ENCODE measurements at regions of chr10 and their contacts with region 1.

Region 1: GRCh38 chr10:21238717-21239116 is 286.8 kb downstream of the SKIDA1 start:
- DNase-seq: no peak
- H3K4me3 ChIP-seq: no peak overlapping the region
- H3K27ac ChIP-seq: no peak overlapping the region
- H3K4me1 ChIP-seq: peaks cover 0 to 2% (median 0%) of the 10 kb centered on the region in 4 experiments; a peak in 1 of 7 replicates
- H3K27me3 ChIP-seq: no peaks in the 10 kb centered on the region
- CTCF ChIP-seq: no peak
- EP300 ChIP-seq: no peak
- POLR2A ChIP-seq: no peak
- RAD21 ChIP-seq: no peak

Region 2: DNA sequence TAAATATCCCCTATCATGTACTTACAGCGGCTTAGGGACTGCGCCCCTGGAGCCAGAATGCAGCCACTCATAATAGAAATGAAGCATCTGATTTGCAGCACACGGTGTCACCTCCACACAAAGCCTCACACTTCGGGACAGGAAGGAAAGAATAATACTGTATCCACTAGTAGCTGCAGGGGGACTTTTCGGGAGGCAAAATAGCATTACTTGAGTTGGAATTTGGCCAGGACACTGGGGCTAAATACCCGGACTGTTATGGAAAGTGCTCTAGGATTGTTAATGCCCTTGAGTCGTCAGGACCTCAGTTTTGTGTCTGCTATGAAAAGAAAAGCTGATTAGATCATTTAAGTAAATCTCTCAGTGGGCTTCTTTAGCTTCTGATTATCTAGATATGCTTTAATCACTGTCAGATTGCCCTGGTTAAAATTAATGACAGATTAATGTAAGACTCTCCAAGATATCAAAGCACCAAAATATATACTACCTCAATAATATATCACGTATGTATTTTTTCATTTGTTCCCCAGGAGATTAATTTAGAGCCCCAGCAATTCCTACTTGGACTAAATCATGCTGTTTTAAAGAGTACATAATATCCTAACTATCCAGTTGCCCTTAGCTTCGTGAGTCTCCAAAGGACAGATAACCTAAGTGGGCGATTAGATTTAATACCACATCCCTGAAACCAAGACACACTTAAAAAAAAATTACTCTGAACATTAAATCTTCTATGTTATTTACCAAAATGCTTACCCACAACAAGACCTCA is 168.6 kb before region 1 on chr10:
- CTCF ChIA-PET with region 1: no interaction called
- POLR2A ChIA-PET with region 1: no interaction called
- DNase-seq: no peak
- H3K4me3 ChIP-seq: no peak overlapping the region
- H3K27ac ChIP-seq: no peak overlapping the region
- H3K4me1 ChIP-seq: peaks cover 0 to 3% (median 0%) of the 10 kb centered on the region in 4 experiments; a peak in 1 of 7 replicates
- H3K27me3 ChIP-seq: no peaks in the 10 kb centered on the region
- CTCF ChIP-seq: no peak
- EP300 ChIP-seq: no peak
- POLR2A ChIP-seq: no peak
- RAD21 ChIP-seq: no peak

Region 3: GRCh38 chr10:21260506-21261149 is 21.9 kb after region 1 on chr10:
- CTCF ChIA-PET with region 1: interaction called, 36 read pairs
- POLR2A ChIA-PET with region 1: no interaction called
- DNase-seq: no peak
- H3K4me3 ChIP-seq: no peak overlapping the region
- H3K27ac ChIP-seq: no peak overlapping the region
- H3K4me1 ChIP-seq: peaks cover 0 to 4% (median 1%) of the 10 kb centered on the region in 4 experiments; a peak in 3 of 7 replicates
- H3K27me3 ChIP-seq: no peaks in the 10 kb centered on the region
- CTCF ChIP-seq: no peak
- EP300 ChIP-seq: no peak
- POLR2A ChIP-seq: no peak
- RAD21 ChIP-seq: peak in 1 of 2 experiments; percentile 25; a peak in 2 of 4 replicates

Region 4: DNA sequence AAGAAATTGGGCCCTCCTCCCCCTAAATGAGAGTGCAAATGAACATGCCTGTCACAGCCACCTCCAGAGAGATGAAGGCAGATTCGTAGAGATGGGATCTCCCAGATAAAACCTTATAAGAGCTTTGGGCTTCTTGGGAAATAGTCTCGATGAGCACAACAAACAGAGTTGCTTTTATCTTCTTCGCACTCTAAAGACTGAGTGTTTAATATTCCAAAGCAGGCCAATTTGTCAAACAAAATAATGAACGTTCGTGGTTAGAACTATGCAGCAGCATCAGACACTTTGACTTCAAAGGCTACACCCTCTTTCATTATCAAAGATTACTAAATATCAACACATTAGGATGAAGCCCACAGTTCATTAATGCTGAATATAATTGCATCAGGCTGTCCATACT is 30.6 kb after region 1 on chr10:
- CTCF ChIA-PET with region 1: interaction called, 10 read pairs
- POLR2A ChIA-PET with region 1: no interaction called
- DNase-seq: no peak
- H3K4me3 ChIP-seq: no peak overlapping the region
- H3K27ac ChIP-seq: no peak overlapping the region
- H3K4me1 ChIP-seq: no peaks in the 10 kb centered on the region
- H3K27me3 ChIP-seq: no peaks in the 10 kb centered on the region
- CTCF ChIP-seq: no peak
- EP300 ChIP-seq: no peak
- POLR2A ChIP-seq: no peak
- RAD21 ChIP-seq: no peak

Measured in H1 (cell line).